MCF 10A (cell line): ENCODE measurements at regions of chrX and their contacts with region 1.

Region 1: GRCh38 chrX:133335027-133335426 is 80.3 kb downstream of the GPC4 start:
- DNase-seq: peak; percentile 59
- H3K4me3 Mint-ChIP-seq: no peak overlapping the region
- H3K27ac Mint-ChIP-seq: no peak overlapping the region
- H3K4me1 Mint-ChIP-seq: no peaks in the 10 kb centered on the region
- H3K27me3 Mint-ChIP-seq: peaks cover 28% of the 10 kb centered on the region
- CTCF ChIP-seq: peak; percentile 60

Region 2: GRCh38 chrX:133323431-133323830 is 11.6 kb before region 1 on chrX:
- CTCF ChIA-PET with region 1: interaction called, 18 read pairs
- POLR2A ChIA-PET with region 1: interaction called, 3 read pairs
- intact Hi-C with region 1: no loop called
- DNase-seq: no peak
- H3K4me3 Mint-ChIP-seq: no peak overlapping the region
- H3K27ac Mint-ChIP-seq: no peak overlapping the region
- H3K4me1 Mint-ChIP-seq: no peaks in the 10 kb centered on the region
- H3K27me3 Mint-ChIP-seq: peaks cover 57% of the 10 kb centered on the region
- CTCF ChIP-seq: no peak

Region 3: DNA sequence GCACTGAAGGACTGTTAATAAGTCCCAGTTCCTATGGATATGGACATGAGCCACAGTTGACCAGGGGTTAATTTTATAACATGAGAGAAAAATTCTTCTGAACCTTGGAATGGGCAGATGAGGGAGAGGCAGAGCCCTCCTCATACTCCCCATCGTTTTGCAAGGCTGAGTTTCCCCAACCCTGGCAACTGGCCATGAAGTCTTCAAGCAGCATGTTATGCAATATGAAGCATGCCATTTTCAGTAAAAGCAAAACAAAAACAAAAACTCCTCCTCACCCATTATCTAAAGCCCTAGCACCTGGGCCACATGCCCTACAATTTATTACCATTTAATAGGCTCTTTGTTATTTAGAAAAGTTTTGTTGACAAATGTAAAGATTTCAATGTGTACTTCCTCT is 15.7 kb after region 1 on chrX:
- CTCF ChIA-PET with region 1: interaction called, 14 read pairs
- POLR2A ChIA-PET with region 1: interaction called, 3 read pairs
- intact Hi-C with region 1: no loop called
- DNase-seq: peak; percentile 78
- H3K4me3 Mint-ChIP-seq: no peak overlapping the region
- H3K27ac Mint-ChIP-seq: no peak overlapping the region
- H3K4me1 Mint-ChIP-seq: no peaks in the 10 kb centered on the region
- H3K27me3 Mint-ChIP-seq: peaks cover 48% of the 10 kb centered on the region
- CTCF ChIP-seq: no peak

Region 4: GRCh38 chrX:133670383-133670782 is 335.4 kb after region 1 on chrX:
- CTCF ChIA-PET with region 1: interaction called, 34 read pairs
- POLR2A ChIA-PET with region 1: no interaction called
- intact Hi-C with region 1: loop called (anchors 1 kb)
- DNase-seq: peak; percentile 57
- H3K4me3 Mint-ChIP-seq: no peak overlapping the region
- H3K27ac Mint-ChIP-seq: no peak overlapping the region
- H3K4me1 Mint-ChIP-seq: no peaks in the 10 kb centered on the region
- H3K27me3 Mint-ChIP-seq: peaks cover 48% of the 10 kb centered on the region
- CTCF ChIP-seq: peak; percentile 79

Region 5: GRCh38 chrX:133776072-133776471 is 441.0 kb after region 1 on chrX:
- CTCF ChIA-PET with region 1: no interaction called
- POLR2A ChIA-PET with region 1: no interaction called
- intact Hi-C with region 1: loop called (anchors 1 kb)
- DNase-seq: peak; percentile 34
- H3K4me3 Mint-ChIP-seq: no peak overlapping the region
- H3K27ac Mint-ChIP-seq: no peak overlapping the region
- H3K4me1 Mint-ChIP-seq: no peaks in the 10 kb centered on the region
- H3K27me3 Mint-ChIP-seq: peaks cover 73% of the 10 kb centered on the region
- CTCF ChIP-seq: peak; percentile 57